T-cell (primary cell): ENCODE measurements at regions of chr17 and their contacts with region 1.

Region 1: DNA sequence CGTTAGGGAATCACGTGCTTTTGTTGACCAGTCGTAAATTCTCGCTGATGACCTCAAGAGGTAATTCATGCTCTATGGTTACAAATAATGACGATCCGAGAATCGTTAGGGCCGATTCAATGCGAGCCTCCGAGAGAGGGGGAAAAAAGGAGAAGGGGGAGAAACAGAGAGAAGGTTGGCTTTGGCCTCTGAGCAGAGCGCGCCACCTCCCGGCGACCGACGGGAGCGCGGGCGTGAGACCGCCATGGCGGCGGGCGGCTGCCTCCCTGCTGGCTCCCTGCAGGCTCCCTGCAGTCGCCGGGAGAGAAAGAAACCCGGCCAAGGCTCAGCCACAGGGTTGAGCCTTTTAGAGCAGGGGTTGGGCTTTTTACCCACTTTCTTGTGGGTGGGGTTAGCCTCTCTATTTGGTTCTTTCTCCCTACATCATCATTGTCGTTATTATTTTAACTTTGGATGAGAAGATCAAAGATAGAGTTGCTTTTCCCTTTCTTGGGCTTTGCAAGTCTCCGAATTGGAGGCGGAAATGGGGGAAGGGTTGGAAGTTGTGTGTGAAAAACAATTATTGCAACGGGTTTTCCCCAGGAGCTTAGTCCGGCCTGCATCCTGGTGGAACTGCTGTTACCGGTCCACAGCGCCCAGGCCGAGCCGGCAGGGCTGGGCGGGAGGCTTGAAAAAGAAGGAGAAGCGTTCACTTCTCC is 410 bp upstream of the HOXB5 start:
- DNase-seq: peak; percentile 52 to 90 (median 75)
- ATAC-seq: peak; percentile 58 to 73 (median 64)
- H3K4me3 ChIP-seq: peak overlapping the region; percentile 15 to 43
- H3K4me3 Mint-ChIP-seq: peak overlapping the region; percentile 70 to 82 (median 76)
- H3K27ac ChIP-seq: no peak overlapping the region
- H3K27ac Mint-ChIP-seq: no peak overlapping the region
- H3K4me1 ChIP-seq: peaks cover 8 to 54% of the 10 kb centered on the region in 2 experiments
- H3K4me1 Mint-ChIP-seq: peaks cover 47 to 53% (median 48%) of the 10 kb centered on the region in 3 donors
- H3K27me3 ChIP-seq: peaks cover 3 to 92% of the 10 kb centered on the region in 2 experiments
- H3K27me3 Mint-ChIP-seq: peaks cover 87 to 88% of the 10 kb centered on the region in 2 donors

Region 2: DNA sequence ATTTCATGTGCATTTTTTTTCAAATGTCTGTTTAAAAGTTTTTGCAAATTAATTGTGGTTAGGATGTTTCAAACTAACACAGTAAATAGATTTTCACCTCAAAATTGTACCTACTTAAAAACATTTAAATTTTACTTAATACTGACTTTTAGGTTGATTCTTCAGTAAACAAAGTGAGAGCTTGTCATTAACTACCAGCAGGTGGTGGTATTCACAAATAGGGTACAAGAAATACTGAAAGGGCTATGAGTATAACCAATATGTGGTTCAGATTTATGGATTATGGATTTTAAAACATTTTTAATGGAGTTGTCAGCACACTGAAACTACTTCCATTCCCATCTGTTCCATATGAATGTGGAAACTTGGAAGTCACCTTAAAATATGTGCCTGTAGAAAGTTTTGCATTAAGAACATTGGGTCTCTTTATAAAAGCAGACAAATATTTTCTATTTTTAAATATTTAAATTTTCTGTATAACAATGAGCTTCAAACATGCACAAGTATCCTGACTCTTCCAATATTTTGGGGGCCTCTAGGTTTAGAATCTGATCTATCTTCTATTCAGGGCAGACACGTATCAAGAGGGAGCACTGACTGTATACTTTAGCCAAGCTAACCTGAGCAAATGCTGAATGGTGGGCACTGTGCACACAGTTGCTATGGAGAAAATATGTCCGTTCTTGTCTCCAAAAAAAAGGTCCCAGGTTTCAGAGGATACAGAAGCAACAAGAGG is 330.8 kb before region 1 on chr17:
- CTCF ChIA-PET with region 1: interaction called, 5 to 18 read pairs
- POLR2A ChIA-PET with region 1: interaction called in 1 of 2 experiments, 3 read pairs
- DNase-seq: peak in 1 of 35 experiments; percentile 32
- ATAC-seq: no peak
- H3K4me3 ChIP-seq: no peak overlapping the region
- H3K4me3 Mint-ChIP-seq: no peak overlapping the region
- H3K27ac ChIP-seq: no peak overlapping the region
- H3K27ac Mint-ChIP-seq: no peak overlapping the region
- H3K4me1 ChIP-seq: peaks cover 0 to 12% of the 10 kb centered on the region in 2 experiments
- H3K4me1 Mint-ChIP-seq: peaks cover 12 to 28% (median 28%) of the 10 kb centered on the region in 3 donors
- H3K27me3 ChIP-seq: no peaks in the 10 kb centered on the region
- H3K27me3 Mint-ChIP-seq: no peaks in the 10 kb centered on the region

Region 3: DNA sequence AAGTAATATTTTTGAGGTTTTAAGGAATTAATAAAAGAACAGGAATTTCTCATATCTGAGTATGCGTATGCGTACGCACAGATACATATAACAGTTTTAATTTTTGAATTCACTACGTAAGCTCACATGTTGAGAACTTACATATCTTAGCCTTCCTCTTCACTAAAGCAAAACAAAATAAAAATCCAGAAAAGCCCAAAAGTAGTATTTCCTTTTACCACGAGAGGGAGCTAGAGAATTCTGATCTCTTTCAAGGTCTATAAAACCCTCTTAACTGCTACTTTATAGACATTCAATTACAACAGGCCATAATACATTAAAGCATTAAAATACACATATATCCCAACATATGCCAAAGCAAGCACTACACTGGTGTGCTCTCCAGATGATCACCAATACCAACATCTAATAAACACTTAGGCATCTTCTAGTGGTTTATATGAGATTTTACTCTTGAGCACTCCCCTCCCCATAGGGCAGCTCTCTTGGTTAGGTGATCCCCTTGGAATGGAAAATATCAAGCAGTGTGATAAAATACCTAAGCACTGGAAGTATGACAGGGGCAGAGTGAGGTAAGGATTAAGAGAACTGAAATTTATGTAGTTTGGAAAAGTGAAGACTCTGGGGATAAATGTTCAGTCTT is 258.0 kb before region 1 on chr17:
- CTCF ChIA-PET with region 1: interaction called, 4 to 63 read pairs
- POLR2A ChIA-PET with region 1: no interaction called
- DNase-seq: peak in 2 of 35 experiments; percentile 12 to 79
- ATAC-seq: peak; percentile 48 to 60 (median 57)
- H3K4me3 ChIP-seq: no peak overlapping the region
- H3K4me3 Mint-ChIP-seq: no peak overlapping the region
- H3K27ac ChIP-seq: no peak overlapping the region
- H3K27ac Mint-ChIP-seq: peak overlapping the region in 1 of 2 donors; percentile 61
- H3K4me1 ChIP-seq: no peaks in the 10 kb centered on the region
- H3K4me1 Mint-ChIP-seq: peaks cover 6 to 9% (median 7%) of the 10 kb centered on the region in 3 donors
- H3K27me3 ChIP-seq: no peaks in the 10 kb centered on the region
- H3K27me3 Mint-ChIP-seq: no peaks in the 10 kb centered on the region

Region 4: DNA sequence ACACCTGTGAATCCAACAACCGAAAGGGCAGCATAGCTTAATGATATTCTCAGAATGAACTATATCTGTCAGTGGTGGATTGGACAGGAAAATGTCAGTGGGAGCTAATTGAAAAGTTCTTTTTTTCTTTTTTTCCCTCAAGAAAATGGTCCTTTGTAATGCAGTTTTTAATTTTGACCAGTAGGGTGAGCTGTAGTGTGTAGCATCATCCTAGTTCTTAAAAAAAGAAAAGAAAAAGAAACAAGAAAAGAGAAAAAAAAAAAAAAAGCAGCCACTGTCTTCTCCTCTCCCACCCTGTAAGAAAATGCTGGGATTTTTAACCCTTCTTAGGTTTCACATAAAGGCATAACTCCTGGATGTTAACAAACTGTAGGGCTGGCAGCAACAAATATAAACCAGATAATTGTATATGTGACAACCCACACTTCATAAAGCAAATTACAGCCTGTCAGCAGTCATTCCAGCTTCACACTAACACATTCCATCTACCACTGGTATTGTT is 242.1 kb before region 1 on chr17:
- CTCF ChIA-PET with region 1: interaction called, 5 to 25 read pairs
- POLR2A ChIA-PET with region 1: interaction called in 1 of 2 experiments, 5 read pairs
- DNase-seq: peak in 2 of 35 experiments; percentile 14 to 69
- ATAC-seq: peak in 1 of 4 experiments; percentile 61
- H3K4me3 ChIP-seq: no peak overlapping the region
- H3K4me3 Mint-ChIP-seq: no peak overlapping the region
- H3K27ac ChIP-seq: no peak overlapping the region
- H3K27ac Mint-ChIP-seq: no peak overlapping the region
- H3K4me1 ChIP-seq: no peaks in the 10 kb centered on the region
- H3K4me1 Mint-ChIP-seq: peaks cover 15 to 18% (median 16%) of the 10 kb centered on the region in 3 donors
- H3K27me3 ChIP-seq: no peaks in the 10 kb centered on the region
- H3K27me3 Mint-ChIP-seq: no peaks in the 10 kb centered on the region

Region 5: GRCh38 chr17:48492401-48493298 is 101.3 kb before region 1 on chr17:
- CTCF ChIA-PET with region 1: interaction called, 3 to 15 read pairs
- POLR2A ChIA-PET with region 1: no interaction called
- DNase-seq: peak in 34 of 35 experiments; percentile 24 to 82 (median 56)
- ATAC-seq: peak; percentile 95 to 97 (median 96)
- H3K4me3 ChIP-seq: peak overlapping the region; percentile 39 to 63
- H3K4me3 Mint-ChIP-seq: peak overlapping the region; percentile 49 to 52 (median 50)
- H3K27ac ChIP-seq: no peak overlapping the region
- H3K27ac Mint-ChIP-seq: no peak overlapping the region
- H3K4me1 ChIP-seq: peaks cover 2 to 18% of the 10 kb centered on the region in 2 experiments
- H3K4me1 Mint-ChIP-seq: peaks cover 7 to 20% (median 10%) of the 10 kb centered on the region in 3 donors
- H3K27me3 ChIP-seq: peaks cover 0 to 26% of the 10 kb centered on the region in 2 experiments
- H3K27me3 Mint-ChIP-seq: peaks cover 5 to 13% of the 10 kb centered on the region in 2 donors